ENCODE measurements at regions of chr13 and their contacts with region 1.

Region 1: GRCh38 chr13:91381371-91381770 is 17.1 kb upstream of the GPC5 start:
- DNase-seq: no peak
- H3K4me3 Mint-ChIP-seq: no peak overlapping the region
- H3K27ac Mint-ChIP-seq: no peak overlapping the region
- H3K4me1 Mint-ChIP-seq: no peaks in the 10 kb centered on the region
- H3K27me3 Mint-ChIP-seq: peaks cover 24% of the 10 kb centered on the region

Region 2: DNA sequence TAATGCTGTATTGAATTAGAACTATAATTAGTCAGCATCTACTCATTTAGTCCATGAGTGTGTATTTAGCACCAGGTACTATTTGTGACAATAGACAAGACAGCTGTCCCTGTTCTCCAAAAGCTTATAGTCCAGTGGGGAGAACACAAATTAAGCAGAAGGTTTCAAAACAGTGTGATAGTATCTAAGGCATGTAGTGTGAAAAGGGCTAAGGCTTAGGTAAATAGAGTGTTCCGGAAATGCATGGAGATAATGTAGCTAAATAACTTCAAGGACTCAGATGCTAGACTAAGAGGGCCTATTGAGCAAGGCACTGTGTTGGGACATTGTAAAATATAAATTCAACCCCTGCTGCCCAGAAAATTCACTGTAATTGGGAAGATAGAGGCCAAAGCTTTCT is 177.9 kb before region 1 on chr13:
- intact Hi-C with region 1: no loop called
- DNase-seq: no peak
- H3K4me3 Mint-ChIP-seq: no peak overlapping the region
- H3K27ac Mint-ChIP-seq: no peak overlapping the region
- H3K4me1 Mint-ChIP-seq: no peaks in the 10 kb centered on the region
- H3K27me3 Mint-ChIP-seq: no peaks in the 10 kb centered on the region

Region 3: GRCh38 chr13:91722267-91722884 is 341.0 kb after region 1 on chr13:
- intact Hi-C with region 1: loop called (anchors 1 kb)
- DNase-seq: no peak
- H3K4me3 Mint-ChIP-seq: no peak overlapping the region
- H3K27ac Mint-ChIP-seq: no peak overlapping the region
- H3K4me1 Mint-ChIP-seq: no peaks in the 10 kb centered on the region
- H3K27me3 Mint-ChIP-seq: no peaks in the 10 kb centered on the region